ENCODE measurements at regions of chr11 and their contacts with region 1.

Region 1: GRCh38 chr11:66677599-66678375 is at the start of gene RBM4B:
- DNase-seq: peak; percentile 86 to 97
- H3K4me3 ChIP-seq: peak within 1 kb of the TSS; percentile 66
- H3K27ac ChIP-seq: peak within 1 kb of the TSS; percentile 80
- H3K4me1 ChIP-seq: peaks cover 23% of the 10 kb centered on the region
- H3K27me3 ChIP-seq: no peaks in the 10 kb centered on the region
- CTCF ChIP-seq: no peak
- total RNA-seq, gene RBM4B: 17.8 and 24.8 TPM in 2 replicates

Region 2: DNA sequence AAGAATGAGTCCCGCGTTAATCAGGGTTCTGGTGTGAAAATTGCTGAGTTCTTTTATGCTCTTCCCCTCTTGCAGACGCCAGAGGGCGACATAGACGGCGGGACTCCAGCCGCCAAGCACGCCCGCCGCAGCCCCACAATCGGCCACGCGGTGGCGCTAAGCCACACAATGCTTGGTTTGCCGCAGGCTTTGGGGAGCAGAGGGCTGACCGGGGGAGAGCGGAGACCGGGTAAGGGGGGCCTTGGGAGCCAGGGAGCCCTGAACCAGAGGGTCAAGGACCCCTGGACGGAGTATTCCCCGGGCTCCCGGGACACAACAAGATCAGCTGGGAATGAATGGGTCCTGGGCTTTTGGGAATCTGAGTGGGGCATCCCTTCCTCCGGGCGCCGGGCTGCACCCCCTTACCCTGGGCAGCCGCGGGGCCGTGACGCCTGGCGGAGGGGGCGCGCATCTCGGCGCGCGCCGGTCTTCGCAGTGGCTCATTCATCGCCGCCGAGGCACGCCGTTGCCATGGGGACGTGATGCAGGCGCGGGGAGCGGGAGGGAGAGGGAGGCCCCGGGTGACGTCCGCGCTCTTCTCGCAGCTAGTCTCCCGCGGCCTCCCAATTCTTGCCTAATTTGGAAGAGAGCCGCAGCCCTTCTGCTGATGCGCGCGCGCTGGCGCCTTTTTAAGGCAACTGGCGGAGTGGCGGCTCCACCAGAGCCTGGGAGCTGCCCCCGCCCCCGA is 269.1 kb before region 1 on chr11:
- CTCF ChIA-PET with region 1: interaction called, 3 read pairs
- POLR2A ChIA-PET with region 1: interaction called, 3 read pairs
- intact Hi-C with region 1: loop called (anchors 1 kb)
- DNase-seq: peak; percentile 58 to 87
- H3K4me3 ChIP-seq: no peak overlapping the region
- H3K27ac ChIP-seq: no peak overlapping the region
- H3K4me1 ChIP-seq: no peaks in the 10 kb centered on the region
- H3K27me3 ChIP-seq: peaks cover 88% of the 10 kb centered on the region
- CTCF ChIP-seq: peak; percentile 100

Region 3: DNA sequence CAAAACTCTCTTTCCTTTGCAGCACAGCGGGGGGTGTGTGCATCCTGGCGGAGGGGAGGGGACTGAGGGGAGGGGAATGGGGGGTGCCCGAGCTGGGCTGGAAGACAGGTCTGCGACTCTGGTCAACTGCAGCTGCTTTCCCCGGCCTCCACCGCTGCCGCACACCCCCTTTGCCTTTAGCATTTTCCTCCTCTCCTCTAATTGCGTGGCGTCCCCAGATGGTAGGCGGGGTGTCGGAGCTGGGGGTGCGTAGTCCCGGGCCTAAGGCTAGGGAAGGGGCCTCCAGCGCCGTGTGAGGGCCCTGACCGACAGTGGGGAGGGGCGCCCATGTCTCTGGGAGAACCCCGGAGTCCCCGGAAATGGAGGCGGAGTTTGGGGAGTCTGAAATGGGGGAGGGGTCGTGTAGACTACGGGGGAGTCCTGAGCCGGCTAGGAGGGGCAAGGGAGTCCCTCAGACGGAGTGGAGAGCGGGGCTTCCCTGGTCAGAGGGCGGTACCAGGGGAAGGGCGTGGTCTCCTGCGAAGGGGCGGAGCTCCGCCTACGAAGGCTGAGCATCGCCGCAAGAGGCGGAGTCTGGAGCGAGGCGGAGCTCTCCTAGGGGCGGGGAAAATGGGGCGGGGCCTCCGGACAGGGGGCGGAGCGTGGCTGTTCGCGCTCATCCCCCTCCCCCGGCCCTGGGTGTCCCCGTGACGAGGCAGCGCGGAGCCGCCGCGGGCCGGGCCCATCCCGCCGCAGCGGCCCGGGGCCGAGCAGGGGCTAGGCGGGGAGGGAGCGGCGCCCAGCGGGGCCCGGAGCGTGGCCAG is 211.4 kb before region 1 on chr11 and contains the start of gene PELI3:
- CTCF ChIA-PET with region 1: no interaction called
- POLR2A ChIA-PET with region 1: interaction called, 19 read pairs
- intact Hi-C with region 1: no loop called
- DNase-seq: peak; percentile 77 to 95
- H3K4me3 ChIP-seq: peak within 1 kb of the TSS; percentile 90
- H3K27ac ChIP-seq: no peak within 1 kb of the TSS
- H3K4me1 ChIP-seq: peaks cover 10% of the 10 kb centered on the region
- H3K27me3 ChIP-seq: no peaks in the 10 kb centered on the region
- CTCF ChIP-seq: no peak
- total RNA-seq, gene PELI3: 14.0 and 18.0 TPM in 2 replicates

Region 4: DNA sequence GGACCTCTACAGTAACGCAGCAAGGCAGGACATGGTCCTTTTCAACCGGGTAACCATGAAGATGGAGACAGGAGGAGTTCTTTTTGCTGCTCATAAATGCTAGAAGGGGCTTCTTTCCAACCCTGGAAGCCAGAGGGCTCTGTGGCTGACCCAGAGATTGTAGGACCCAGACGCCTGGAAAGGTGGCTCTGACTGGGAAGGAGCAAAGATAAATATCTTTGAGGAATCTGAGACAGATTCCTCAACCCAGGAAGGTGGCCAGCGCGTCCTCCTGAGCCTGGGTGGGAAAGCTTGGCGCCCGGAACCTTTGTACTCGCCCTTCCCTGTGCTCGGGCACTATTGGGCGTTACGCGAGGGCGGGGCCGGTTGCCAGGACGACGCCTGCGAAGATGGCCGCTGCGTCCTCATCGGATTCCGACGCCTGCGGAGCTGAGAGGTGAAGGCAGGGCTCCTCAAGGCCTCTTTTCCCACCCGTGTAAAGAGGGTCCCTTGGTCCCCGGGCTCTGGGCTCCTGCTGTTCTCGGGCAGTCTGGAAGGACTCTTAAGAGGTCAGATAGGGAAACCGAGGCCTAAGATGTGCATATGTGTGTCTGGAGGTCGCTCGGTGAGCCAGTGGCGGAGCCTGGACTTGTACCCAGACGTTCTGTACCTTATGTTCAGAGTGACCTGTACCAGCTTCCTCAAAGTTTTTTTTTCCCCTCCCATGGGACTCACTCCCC is 167.4 kb before region 1 on chr11 and contains the start of gene BBS1:
- CTCF ChIA-PET with region 1: interaction called, 16 read pairs
- POLR2A ChIA-PET with region 1: no interaction called
- intact Hi-C with region 1: no loop called
- DNase-seq: peak; percentile 71 to 79
- H3K4me3 ChIP-seq: peak within 1 kb of the TSS; percentile 93
- H3K27ac ChIP-seq: no peak within 1 kb of the TSS
- H3K4me1 ChIP-seq: peaks cover 11% of the 10 kb centered on the region
- H3K27me3 ChIP-seq: no peaks in the 10 kb centered on the region
- CTCF ChIP-seq: no peak
- total RNA-seq, gene BBS1: 56.1 and 63.4 TPM in 2 replicates

Region 5: DNA sequence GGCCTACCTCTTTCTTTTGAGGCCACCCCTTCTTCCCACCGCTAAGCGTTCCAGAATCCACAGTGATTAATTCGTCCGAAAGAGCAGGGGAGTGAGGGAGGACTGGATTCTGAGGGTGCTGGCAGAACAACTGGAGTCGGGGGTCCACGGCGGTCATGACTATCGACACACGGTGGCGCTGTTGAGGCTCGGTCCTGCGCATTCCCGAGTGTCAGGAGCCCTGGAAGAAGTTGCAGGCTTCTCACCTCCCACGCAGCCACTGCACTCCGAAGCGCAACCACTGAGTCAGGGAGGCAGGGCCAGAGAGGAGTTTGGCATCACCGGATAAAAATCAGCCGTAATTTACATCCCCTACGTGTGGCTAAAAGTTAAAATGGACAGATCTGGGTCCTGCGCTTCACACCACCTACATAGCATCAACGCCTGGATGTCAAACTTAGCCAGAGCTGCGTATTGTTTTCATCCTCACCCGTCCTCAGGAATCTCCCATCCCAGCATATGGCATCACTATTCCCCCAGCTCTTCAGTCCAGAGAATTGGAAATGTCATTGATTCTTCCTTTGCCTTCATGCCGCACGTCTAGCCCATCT is 98.7 kb before region 1 on chr11:
- CTCF ChIA-PET with region 1: no interaction called
- POLR2A ChIA-PET with region 1: no interaction called
- intact Hi-C with region 1: loop called (anchors 1 kb)
- DNase-seq: peak in 1 of 2 experiments; percentile 61
- H3K4me3 ChIP-seq: no peak overlapping the region
- H3K27ac ChIP-seq: no peak overlapping the region
- H3K4me1 ChIP-seq: no peaks in the 10 kb centered on the region
- H3K27me3 ChIP-seq: peaks cover 54% of the 10 kb centered on the region
- CTCF ChIP-seq: peak; percentile 84

Region 6: DNA sequence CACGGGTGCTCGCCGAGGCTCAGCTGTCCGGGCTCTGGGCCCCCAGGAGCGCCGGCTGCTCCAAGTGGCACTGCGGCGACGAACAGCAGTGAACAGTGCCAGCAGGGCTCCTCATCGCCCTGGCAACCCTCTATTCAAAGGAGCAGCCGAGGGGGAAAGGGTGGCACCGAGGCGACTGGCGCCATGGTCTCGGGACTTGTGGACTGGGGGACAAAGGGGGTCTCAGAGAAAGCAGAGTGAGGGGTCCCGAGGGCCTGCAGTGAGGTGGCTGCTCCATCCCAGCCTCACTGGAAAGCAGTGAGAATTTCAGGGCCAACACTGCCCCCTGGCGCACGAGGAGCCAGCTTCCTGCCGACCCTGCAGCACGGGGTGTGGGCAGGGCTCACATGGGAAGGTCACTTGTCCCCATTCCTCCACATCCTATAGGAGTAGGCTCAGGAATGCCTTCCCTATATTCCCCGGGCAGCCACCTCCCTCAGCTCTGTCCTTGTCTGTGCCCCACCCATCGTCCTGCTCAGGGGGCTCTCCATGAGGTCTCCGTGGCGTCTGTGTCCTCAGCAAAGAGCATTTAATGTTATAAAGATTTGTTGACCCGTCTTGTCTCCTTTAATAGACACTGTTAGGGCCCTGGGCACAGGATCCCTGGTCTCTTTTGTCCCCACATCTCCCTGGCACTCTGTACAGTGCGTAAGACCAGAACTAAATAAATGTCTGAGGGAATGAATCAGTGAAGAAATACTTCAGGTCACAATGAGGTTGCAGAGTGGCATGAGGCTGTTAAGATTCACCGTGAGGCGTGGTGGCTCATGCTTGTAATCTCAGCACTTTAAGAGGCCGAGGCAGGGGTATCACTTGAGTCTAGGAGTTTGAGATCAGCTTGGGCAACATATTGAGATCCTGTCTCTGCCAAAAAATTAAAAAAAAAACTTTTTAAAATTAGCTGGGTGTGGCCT is 205.5 kb after region 1 on chr11:
- CTCF ChIA-PET with region 1: no interaction called
- POLR2A ChIA-PET with region 1: interaction called, 12 read pairs
- intact Hi-C with region 1: no loop called
- DNase-seq: peak; percentile 85 to 89
- H3K4me3 ChIP-seq: peak overlapping the region; percentile 2; the same call in 1 of the 2 replicates
- H3K27ac ChIP-seq: peak overlapping the region; percentile 78
- H3K4me1 ChIP-seq: peaks cover 49% of the 10 kb centered on the region
- H3K27me3 ChIP-seq: no peaks in the 10 kb centered on the region
- CTCF ChIP-seq: peak; percentile 86

Region 7: GRCh38 chr11:67534070-67534679 is 856.4 kb after region 1 on chr11:
- CTCF ChIA-PET with region 1: no interaction called
- POLR2A ChIA-PET with region 1: no interaction called
- intact Hi-C with region 1: no loop called
- DNase-seq: no peak
- H3K4me3 ChIP-seq: no peak overlapping the region
- H3K27ac ChIP-seq: no peak overlapping the region
- H3K4me1 ChIP-seq: peaks cover 7% of the 10 kb centered on the region
- H3K27me3 ChIP-seq: no peaks in the 10 kb centered on the region
- CTCF ChIP-seq: no peak

Region 8: DNA sequence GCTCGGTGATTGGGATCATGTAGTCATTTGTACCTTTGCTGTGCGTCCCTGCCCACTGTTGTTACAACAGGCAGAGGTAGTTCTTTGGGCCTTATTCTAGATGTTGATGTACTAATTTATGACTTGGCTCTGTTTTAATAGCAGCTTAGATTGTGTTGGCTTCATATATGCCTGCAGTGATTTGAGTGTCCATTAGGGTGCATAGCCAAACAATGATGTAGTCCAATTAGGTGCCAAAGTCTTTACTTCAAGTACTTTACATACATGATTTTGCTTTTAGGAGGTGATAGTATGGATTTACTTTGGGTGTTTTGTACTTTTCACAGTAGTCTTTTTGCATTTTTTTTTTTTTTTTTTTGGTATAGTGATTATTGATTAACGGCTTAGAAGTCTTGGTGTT is 1829.1 kb after region 1 on chr11:
- CTCF ChIA-PET with region 1: no interaction called
- POLR2A ChIA-PET with region 1: no interaction called
- intact Hi-C with region 1: no loop called
- DNase-seq: no peak
- H3K4me3 ChIP-seq: no peak overlapping the region
- H3K27ac ChIP-seq: no peak overlapping the region
- H3K4me1 ChIP-seq: no peaks in the 10 kb centered on the region
- H3K27me3 ChIP-seq: no peaks in the 10 kb centered on the region
- CTCF ChIP-seq: no peak

Measured in PC-9 (cell line).